Sigmoid colon (tissue), 7 donors: ENCODE measurements at regions of chr3 and their contacts with region 1.

Region 1: DNA sequence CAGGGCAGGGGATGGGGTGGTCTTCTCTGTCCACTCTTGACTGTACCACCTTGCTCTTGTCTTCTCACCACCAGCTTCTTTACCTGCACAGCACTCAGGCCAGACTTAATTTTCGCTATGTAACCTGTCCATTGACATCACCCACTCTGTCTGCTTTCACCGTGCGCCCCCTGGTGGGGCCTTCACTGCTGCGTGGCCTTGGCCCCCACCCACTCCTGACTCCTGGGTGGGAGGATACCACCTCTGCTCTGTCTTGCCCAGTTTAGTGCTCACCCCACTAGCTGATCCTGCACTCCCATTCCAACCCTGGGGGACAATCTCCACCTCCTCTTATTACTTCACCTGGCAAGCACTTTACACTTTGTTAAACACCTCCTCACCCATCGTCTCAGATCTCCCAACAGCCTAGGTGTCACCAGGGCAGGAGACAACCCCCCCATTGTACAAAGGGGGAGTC is 17.7 kb downstream of the PTH1R start:
- DNase-seq: peak; percentile 84
- H3K4me3 ChIP-seq: no peak overlapping the region
- H3K27ac ChIP-seq: no peak overlapping the region
- H3K4me1 ChIP-seq: peaks cover 0 to 37% (median 31%) of the 10 kb centered on the region in 4 donors
- H3K27me3 ChIP-seq: peaks cover 12 to 31% (median 14%) of the 10 kb centered on the region in 3 donors
- CTCF ChIP-seq: peak; percentile 89 to 95 (median 92)
- EP300 ChIP-seq: no peak
- POLR2A ChIP-seq: no peak

Region 2: GRCh38 chr3:46797458-46797857 is 97.8 kb before region 1 on chr3:
- intact Hi-C with region 1: no loop called
- DNase-seq: no peak
- H3K4me3 ChIP-seq: no peak overlapping the region
- H3K27ac ChIP-seq: no peak overlapping the region
- H3K4me1 ChIP-seq: no peaks in the 10 kb centered on the region
- H3K27me3 ChIP-seq: no peaks in the 10 kb centered on the region
- CTCF ChIP-seq: no peak
- EP300 ChIP-seq: no peak
- POLR2A ChIP-seq: no peak

Region 3: GRCh38 chr3:46845791-46846623 is 49.2 kb before region 1 on chr3:
- intact Hi-C with region 1: loop called (anchors 5 kb)
- DNase-seq: peak; percentile 90
- H3K4me3 ChIP-seq: peak overlapping the region; percentile 36 to 59 (median 55)
- H3K27ac ChIP-seq: peak overlapping the region; percentile 80 to 87 (median 82)
- H3K4me1 ChIP-seq: peaks cover 0 to 27% (median 14%) of the 10 kb centered on the region in 4 donors
- H3K27me3 ChIP-seq: no peaks in the 10 kb centered on the region
- CTCF ChIP-seq: peak; percentile 25 to 67 (median 46)
- EP300 ChIP-seq: no peak
- POLR2A ChIP-seq: no peak

Region 4: GRCh38 chr3:46866720-46867549 is 28.3 kb before region 1 on chr3:
- intact Hi-C with region 1: loop called (anchors 1 kb)
- DNase-seq: peak; percentile 92
- H3K4me3 ChIP-seq: no peak overlapping the region
- H3K27ac ChIP-seq: peak overlapping the region; percentile 60 to 69 (median 64)
- H3K4me1 ChIP-seq: peaks cover 0 to 27% (median 22%) of the 10 kb centered on the region in 4 donors
- H3K27me3 ChIP-seq: no peaks in the 10 kb centered on the region
- CTCF ChIP-seq: peak; percentile 85 to 91 (median 89)
- EP300 ChIP-seq: no peak
- POLR2A ChIP-seq: no peak

Region 5: DNA sequence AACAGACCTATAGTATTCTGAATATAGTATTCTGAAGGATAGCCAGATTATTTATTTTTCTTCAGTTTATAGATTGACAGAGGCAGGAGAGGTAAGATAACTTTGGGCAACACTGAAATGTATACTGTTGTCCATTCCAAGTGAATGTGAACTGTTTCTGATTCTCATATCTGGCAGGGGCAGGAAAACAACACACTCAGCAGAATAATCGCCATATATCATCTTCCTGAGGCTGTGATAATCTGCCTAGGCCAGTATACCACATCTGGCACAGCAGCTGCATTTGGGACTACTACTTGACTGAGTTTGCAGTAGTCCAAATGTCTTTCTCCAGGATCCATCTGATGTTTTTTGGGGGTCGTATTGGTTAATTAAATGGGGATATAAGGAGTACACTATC is 291.1 kb after region 1 on chr3:
- intact Hi-C with region 1: no loop called
- DNase-seq: no peak
- H3K4me3 ChIP-seq: no peak overlapping the region
- H3K27ac ChIP-seq: no peak overlapping the region
- H3K4me1 ChIP-seq: no peaks in the 10 kb centered on the region
- H3K27me3 ChIP-seq: no peaks in the 10 kb centered on the region
- CTCF ChIP-seq: no peak
- EP300 ChIP-seq: no peak
- POLR2A ChIP-seq: no peak